Activated T-helper 2 cell treated with anti-CD3 and anti-CD28 coated beads, Interferon-gamma antibody, Interleukin-2, Interleukin-4, amounts not matched to agents 10 μg/mL and 5 μg/mL and 100 μg/mL, durations not matched to agents 14 hours and 24 hours and 36 hours (primary cell): ENCODE measurements at regions of chr21 and their contacts with region 1.

Region 1: GRCh38 chr21:36319765-36320420 is at the start of gene MORC3:
- DNase-seq: peak; percentile 97
- H3K4me3 Mint-ChIP-seq: peak within 1 kb of the TSS; percentile 91
- H3K27ac Mint-ChIP-seq: peak within 1 kb of the TSS; percentile 92
- H3K4me1 Mint-ChIP-seq: peaks cover 25% of the 10 kb centered on the region
- H3K27me3 Mint-ChIP-seq: no peaks in the 10 kb centered on the region
- total RNA-seq, gene MORC3: 23.8 and 26.2 TPM in 2 replicates

Region 2: DNA sequence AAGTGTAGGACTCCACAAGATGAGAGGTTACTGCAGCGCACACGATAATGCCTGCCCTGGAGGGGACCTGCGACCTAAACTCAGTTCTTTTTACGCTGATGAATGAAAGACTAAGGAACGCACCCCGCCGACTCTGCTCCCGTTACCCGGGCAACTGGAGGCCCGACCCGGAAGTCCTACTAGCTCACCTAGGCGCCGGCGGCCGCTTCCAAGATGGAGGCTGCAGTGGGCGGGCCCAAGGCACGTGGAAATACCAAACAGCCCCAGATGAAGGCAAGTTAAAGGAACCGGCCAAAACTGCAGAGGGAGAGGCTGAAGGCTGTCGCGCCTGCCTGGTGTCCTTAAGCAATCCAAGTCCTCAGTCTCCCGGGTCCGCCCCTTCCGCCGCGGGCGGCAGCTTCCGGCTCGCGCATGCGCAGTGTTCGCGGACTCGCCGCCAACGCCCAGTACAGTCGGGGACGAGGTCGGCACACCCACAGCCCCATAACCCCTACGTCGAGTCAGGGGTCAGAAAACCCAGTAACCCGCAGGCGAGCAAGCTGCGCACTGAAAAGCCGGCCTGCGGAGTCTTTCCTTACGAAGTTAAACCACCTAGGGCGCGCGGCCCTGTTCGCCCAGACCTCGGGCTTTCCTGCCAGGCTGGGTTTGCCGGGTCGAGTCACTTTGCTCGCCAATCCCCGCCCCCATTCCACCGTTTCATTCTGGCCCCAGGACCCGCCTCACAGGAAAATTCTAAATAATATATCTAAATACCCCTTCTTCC is 259.6 kb before region 1 on chr21 and contains the start of gene SETD4:
- intact Hi-C with region 1: loop called (anchors 1 kb)
- DNase-seq: peak; percentile 91
- H3K4me3 Mint-ChIP-seq: peak within 1 kb of the TSS; percentile 91
- H3K27ac Mint-ChIP-seq: peak within 1 kb of the TSS; percentile 98
- H3K4me1 Mint-ChIP-seq: peaks cover 14% of the 10 kb centered on the region
- H3K27me3 Mint-ChIP-seq: no peaks in the 10 kb centered on the region
- total RNA-seq, gene SETD4: 21.4 and 23.8 TPM in 2 replicates

Region 3: DNA sequence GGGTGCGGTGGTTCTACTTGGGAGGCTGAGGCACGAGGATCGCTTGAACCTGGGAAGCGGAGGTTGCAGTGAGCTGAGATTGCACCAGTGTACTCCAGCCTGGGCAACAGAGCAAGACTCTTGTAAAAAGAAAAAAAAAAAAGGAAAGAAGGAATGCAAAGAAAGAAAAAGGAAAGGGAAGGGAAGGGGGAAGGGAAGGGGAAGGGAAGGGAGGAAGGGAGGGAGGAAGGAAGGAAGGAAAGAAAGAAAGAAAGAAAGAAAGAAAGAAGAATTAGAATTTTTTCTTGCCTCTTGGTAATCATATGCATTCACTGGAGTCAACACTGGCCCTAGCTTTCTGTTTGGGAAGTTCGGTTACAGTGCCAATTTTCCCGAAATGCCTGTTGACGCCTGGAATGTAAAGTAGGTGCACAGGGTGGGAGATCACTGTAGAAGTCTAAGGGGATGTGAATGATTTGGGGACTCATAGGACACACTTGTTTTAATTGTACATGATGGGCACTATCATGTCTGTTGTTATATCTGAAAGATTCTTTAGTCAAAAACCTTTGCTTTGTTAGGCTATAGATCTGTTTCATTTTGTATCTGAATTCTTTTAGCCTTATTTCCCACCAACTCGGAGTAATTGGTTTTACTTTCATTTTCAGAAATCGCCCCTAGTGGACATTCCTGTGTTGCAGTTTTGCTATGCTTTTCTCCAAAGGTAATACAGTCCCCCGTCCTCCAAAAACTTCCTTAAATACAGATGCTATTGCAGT is 59.7 kb before region 1 on chr21:
- intact Hi-C with region 1: loop called (anchors 2 kb)
- DNase-seq: peak; percentile 25
- H3K4me3 Mint-ChIP-seq: peak overlapping the region; percentile 70
- H3K27ac Mint-ChIP-seq: peak overlapping the region; percentile 75
- H3K4me1 Mint-ChIP-seq: peaks cover 21% of the 10 kb centered on the region
- H3K27me3 Mint-ChIP-seq: no peaks in the 10 kb centered on the region

Region 4: GRCh38 chr21:36288651-36289243 is 31.1 kb before region 1 on chr21:
- intact Hi-C with region 1: loop called (anchors 2 kb)
- DNase-seq: no peak
- H3K4me3 Mint-ChIP-seq: peak overlapping the region; percentile 34
- H3K27ac Mint-ChIP-seq: peak overlapping the region; percentile 87
- H3K4me1 Mint-ChIP-seq: peaks cover 19% of the 10 kb centered on the region
- H3K27me3 Mint-ChIP-seq: no peaks in the 10 kb centered on the region

Region 5: GRCh38 chr21:36297921-36298594 is 21.8 kb before region 1 on chr21:
- intact Hi-C with region 1: loop called (anchors 1 kb)
- DNase-seq: peak; percentile 77
- H3K4me3 Mint-ChIP-seq: peak overlapping the region; percentile 53
- H3K27ac Mint-ChIP-seq: peak overlapping the region; percentile 89
- H3K4me1 Mint-ChIP-seq: peaks cover 32% of the 10 kb centered on the region
- H3K27me3 Mint-ChIP-seq: no peaks in the 10 kb centered on the region

Region 6: DNA sequence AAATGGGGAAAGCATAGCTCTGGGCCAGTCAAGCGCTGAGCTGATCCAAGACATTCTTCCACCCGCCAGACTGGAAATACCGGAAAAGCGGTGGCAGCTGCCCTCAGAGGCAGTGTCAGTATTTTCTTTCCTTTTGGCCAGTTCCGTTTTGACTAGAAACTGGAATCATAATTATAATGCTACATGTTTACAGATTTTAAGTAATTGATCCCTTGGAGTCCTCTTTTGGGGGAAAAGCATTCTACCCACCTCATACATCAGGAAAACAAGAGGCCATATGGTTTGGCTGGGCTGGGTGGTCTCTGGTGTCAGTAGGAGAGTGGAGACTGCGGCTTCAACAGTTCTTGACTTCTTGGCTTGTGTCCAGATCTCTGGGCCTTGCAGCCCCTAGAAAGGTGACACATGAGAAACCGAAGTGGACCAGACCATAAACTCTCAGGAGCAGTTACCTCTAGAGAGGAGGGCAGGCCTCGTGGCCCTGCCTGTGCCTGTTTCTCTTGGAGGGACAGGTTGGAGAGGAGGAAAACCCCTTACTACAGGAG is 190.3 kb after region 1 on chr21:
- intact Hi-C with region 1: no loop called
- DNase-seq: no peak
- H3K4me3 Mint-ChIP-seq: no peak overlapping the region
- H3K27ac Mint-ChIP-seq: no peak overlapping the region
- H3K4me1 Mint-ChIP-seq: peaks cover 3% of the 10 kb centered on the region
- H3K27me3 Mint-ChIP-seq: peaks cover 9% of the 10 kb centered on the region